Mucosa of descending colon (tissue), 3 donors: ENCODE measurements at regions of chr22 and their contacts with region 1.

Region 1: DNA sequence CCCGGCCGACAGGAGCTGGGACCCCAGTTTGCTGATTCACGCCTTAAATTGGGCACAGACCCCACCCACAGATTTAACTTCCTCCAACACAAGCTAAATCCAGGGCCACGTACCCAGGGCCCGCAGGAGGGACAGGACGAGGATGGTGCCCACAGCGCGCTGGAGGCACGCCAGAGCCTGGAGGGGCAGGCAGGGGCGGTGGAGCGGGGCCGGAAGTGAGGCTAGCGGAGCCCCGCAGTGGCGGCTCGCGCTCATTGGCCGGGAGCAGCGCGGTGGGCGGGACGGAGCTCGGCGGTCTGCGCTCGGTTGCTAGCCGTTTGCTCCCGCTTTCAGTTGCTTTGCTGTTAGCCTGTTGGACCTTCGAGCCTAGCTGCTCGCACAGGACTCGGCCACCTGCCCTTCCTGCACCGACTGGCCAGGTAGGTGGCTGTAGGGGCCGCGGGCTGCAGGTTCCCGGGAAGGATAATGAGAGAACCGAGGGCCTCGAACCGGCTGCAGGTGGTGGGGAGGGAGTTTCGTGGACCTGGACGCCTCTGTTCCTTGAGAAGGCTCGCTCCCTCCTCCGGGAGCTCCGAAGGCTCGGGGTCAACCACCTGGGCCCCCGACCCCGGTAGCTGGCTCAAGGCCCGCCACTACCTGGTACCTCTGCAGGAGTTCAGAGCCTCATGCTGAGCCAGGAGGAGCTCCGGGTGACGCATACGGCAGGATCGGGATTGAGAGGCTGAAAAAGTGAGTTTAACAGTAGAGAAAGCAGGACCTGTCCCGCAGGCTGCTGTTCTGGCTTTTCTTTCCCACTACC is at the start of gene CCDC134:
- DNase-seq: peak; percentile 91 to 96 (median 96)
- ATAC-seq: peak; percentile 98
- H3K4me3 ChIP-seq: peak within 1 kb of the TSS; percentile 42
- H3K4me1 ChIP-seq: peaks cover 15% of the 10 kb centered on the region
- CTCF ChIP-seq: no peak
- total RNA-seq, gene CCDC134: 9.2 to 11.6 (median 10.0) TPM

Region 2: DNA sequence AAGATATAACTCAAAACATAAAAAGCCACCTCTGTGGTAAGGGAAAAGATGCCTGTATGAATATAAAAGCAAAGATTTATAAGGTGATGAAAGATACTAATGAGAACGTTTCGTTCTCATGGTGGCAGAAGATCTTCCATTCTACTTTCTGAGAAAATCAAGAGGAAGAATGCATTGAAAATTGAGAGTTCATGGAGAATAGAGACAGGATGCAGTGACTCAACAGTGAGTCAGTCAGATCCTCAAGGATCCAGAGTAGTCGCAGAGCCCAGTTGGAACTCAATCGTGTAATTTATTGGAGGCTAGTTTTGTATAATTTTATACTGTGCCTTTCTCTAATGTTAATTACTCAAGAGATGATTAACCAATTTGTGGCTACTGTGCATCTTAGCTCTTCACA is 1980.3 kb before region 1 on chr22:
- intact Hi-C with region 1: no loop called
- DNase-seq: no peak
- ATAC-seq: no peak
- H3K4me3 ChIP-seq: no peak overlapping the region
- H3K4me1 ChIP-seq: no peaks in the 10 kb centered on the region
- CTCF ChIP-seq: no peak

Region 3: GRCh38 chr22:41697126-41697775 is 103.3 kb before region 1 on chr22:
- intact Hi-C with region 1: loop called in 1 of 2 experiments (anchors 10 kb)
- DNase-seq: peak; percentile 91 to 100 (median 96)
- ATAC-seq: peak; percentile 96
- H3K4me3 ChIP-seq: no peak overlapping the region
- H3K4me1 ChIP-seq: peaks cover 15% of the 10 kb centered on the region
- CTCF ChIP-seq: peak; percentile 99